Testis (tissue), 5 donors: ENCODE measurements at regions of chr12 and their contacts with region 1.

Region 1: GRCh38 chr12:93569656-93570551 is 2.6 kb upstream of the SOCS2 start:
- DNase-seq: peak; percentile 90
- H3K4me3 ChIP-seq: peak overlapping the region; percentile 64 to 74
- H3K27ac ChIP-seq: peak overlapping the region; percentile 92 to 96
- H3K4me1 ChIP-seq: no peaks in the 10 kb centered on the region
- H3K27me3 ChIP-seq: no peaks in the 10 kb centered on the region
- CTCF ChIP-seq: peak; percentile 62 to 78 (median 62)
- POLR2A ChIP-seq: no peak

Region 2: GRCh38 chr12:93682846-93683261 is 113.0 kb after region 1 on chr12:
- intact Hi-C with region 1: loop called (anchors 10 kb)
- DNase-seq: peak; percentile 30
- H3K4me3 ChIP-seq: no peak overlapping the region
- H3K27ac ChIP-seq: peak overlapping the region; percentile 50 to 86
- H3K4me1 ChIP-seq: peaks cover 24% of the 10 kb centered on the region
- H3K27me3 ChIP-seq: no peaks in the 10 kb centered on the region
- CTCF ChIP-seq: no peak
- POLR2A ChIP-seq: no peak

Region 3: GRCh38 chr12:93742110-93742934 is 172.4 kb after region 1 on chr12:
- intact Hi-C with region 1: loop called (anchors 5 kb)
- DNase-seq: peak; percentile 83
- H3K4me3 ChIP-seq: peak overlapping the region; percentile 51 to 56
- H3K27ac ChIP-seq: peak overlapping the region; percentile 73 to 95
- H3K4me1 ChIP-seq: peaks cover 23% of the 10 kb centered on the region
- H3K27me3 ChIP-seq: no peaks in the 10 kb centered on the region
- CTCF ChIP-seq: peak in 2 of 3 experiments; percentile 9 to 41
- POLR2A ChIP-seq: no peak

Region 4: GRCh38 chr12:94062796-94063635 is 493.1 kb after region 1 on chr12:
- intact Hi-C with region 1: no loop called
- DNase-seq: no peak
- H3K4me3 ChIP-seq: no peak overlapping the region
- H3K27ac ChIP-seq: no peak overlapping the region
- H3K4me1 ChIP-seq: no peaks in the 10 kb centered on the region
- H3K27me3 ChIP-seq: no peaks in the 10 kb centered on the region
- CTCF ChIP-seq: no peak
- POLR2A ChIP-seq: no peak

Region 5: DNA sequence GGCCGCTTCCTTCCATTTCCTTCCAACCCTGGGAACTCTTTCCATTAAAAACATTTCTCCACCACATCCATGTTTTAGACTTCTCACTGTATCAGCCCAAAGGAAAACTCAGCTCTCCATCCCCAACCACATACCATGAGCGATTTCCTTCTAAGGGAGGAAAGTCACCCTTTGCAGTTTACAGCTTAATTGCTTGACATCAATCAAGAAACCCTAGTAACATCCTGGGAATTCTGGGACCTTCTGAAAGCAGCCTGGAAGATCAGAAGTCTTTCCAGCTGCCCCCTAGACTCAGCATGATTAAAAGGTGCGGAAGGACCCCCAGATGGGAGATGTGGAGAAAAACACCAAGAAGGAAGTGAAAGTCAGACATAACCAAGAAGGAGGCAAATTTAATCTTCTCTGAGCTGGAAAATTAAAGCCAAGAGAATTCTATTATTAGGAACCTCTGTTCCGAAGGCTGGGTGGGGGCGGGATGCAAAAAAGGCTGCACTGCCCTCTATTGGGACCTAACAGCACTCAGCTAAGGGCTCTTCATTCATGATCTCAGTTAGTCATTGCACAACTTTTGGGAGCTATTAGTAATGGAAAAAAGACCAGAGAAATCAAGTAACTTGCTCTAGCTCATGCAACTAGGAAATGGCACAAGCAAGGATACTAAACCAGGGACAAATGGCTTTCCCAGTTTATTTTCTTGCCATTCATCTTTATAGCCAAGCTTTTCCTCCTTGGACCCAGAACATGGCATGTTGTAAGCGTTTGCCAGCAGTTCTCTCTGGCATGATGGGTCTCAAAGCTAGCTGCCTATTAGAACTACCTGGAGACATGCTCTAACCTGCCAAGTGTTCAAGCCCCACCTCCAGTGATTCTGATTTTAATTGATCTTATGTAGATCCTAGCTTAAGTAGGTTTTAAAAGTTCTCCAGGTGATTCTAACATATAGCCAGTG is 505.4 kb after region 1 on chr12:
- intact Hi-C with region 1: loop called (anchors 10 kb)
- DNase-seq: peak; percentile 61
- H3K4me3 ChIP-seq: no peak overlapping the region
- H3K27ac ChIP-seq: peak overlapping the region in 1 of 2 donors; percentile 76
- H3K4me1 ChIP-seq: peaks cover 9% of the 10 kb centered on the region
- H3K27me3 ChIP-seq: no peaks in the 10 kb centered on the region
- CTCF ChIP-seq: peak; percentile 12 to 53 (median 48)
- POLR2A ChIP-seq: no peak

Region 6: GRCh38 chr12:94101738-94102660 is 532.1 kb after region 1 on chr12:
- intact Hi-C with region 1: loop called (anchors 5 kb)
- DNase-seq: peak; percentile 94
- H3K4me3 ChIP-seq: peak overlapping the region; percentile 47 to 55
- H3K27ac ChIP-seq: peak overlapping the region in 1 of 2 donors; percentile 32
- H3K4me1 ChIP-seq: peaks cover 9% of the 10 kb centered on the region
- H3K27me3 ChIP-seq: no peaks in the 10 kb centered on the region
- CTCF ChIP-seq: peak; percentile 65 to 80 (median 69)
- POLR2A ChIP-seq: no peak